Cardiac septum (tissue), 1 donor: ENCODE measurements at regions of chr3 and their contacts with region 1.

Region 1: DNA sequence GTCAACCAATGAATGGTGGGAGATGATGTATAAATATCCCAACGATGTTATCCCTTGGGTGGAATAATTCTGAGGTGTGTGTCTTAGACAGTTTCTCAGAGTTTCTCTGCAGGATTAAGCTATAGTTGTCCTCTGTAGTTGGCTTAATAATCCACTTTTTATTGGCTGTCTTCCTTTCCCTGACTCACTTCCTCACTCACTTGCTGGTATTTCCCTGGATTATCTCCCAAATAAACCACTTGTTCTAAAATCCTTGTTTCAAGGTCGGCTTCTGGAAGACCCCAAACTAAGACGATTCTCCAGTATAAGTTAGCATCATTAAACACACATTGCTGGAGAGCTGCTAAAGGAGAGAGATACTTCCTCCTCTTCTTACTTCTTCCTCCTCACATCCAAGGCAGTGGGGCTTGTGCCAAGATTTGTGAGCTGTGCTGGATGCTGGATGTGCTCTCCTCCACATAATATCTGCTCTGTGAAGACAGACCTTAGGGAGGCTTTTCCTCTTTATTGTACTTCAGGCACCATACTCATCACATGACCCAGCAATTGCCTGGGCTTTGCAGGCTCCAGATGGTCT is 22.5 kb upstream of the ROPN1 start:
- DNase-seq: no peak

Region 2: DNA sequence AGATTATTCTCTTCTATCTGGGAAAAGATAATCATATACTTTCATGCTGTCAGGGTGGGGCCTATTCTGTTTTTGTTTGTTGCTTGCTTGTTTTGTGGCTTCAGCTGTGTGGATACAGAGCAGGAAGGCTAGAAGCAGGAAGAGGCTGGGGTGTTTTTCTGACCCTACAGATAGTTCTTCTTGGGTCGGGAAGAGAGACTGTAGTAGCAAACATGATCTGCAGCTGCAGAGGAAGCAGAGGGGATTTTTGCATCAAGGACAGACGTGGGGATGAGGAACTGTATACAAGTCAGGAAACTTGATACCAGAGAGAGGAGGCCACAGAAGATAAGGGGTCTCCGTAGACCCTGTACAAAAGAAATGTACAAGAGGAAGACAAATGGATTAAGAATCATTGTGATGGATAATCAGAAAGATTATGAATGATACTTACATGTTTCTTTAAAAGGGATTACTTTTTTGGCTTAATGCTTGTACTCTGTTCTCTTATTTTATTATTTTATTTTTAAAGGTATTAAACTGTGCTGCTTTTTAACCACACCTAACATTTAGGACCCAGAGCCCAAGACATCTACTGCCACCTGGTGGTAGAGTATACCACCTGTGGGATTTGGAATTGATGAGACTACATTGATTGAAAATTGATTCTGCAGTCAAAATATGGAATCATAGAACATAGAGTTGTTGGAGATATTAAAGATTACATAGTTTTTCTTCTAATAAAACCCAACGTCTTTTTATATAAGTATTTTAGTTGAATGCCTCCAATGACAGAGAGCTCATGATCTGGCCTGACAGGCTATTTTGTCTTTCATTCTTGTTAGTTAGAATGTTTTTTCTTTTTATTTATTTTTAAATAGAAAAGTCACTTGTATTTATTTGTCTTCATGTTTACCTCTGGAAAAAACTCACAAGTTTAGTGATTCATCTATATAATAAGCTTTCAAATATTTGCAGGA is 64.8 kb after region 1 on chr3:
- intact Hi-C with region 1: loop called (anchors 2 kb)
- DNase-seq: no peak

Region 3: DNA sequence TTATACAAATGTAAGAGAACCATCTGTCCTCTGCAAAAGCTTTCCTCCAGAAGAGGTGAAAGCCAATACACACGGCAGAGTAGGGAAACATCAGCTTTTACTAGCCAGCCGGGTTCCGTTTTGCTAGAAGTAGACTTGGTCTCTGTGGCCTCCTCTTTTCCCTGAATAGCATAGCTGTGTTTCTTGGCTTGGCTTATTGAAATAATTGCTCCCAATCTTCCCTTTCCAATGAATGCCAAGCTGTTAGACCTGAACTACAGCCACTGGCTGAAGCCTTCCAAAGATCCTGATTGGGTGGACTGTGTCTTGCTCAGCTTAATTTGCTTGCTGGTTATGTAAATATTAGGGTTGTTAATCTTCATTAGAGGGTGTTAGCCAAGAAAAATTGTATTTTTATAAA is 135.3 kb after region 1 on chr3:
- intact Hi-C with region 1: no loop called
- DNase-seq: no peak

Region 4: DNA sequence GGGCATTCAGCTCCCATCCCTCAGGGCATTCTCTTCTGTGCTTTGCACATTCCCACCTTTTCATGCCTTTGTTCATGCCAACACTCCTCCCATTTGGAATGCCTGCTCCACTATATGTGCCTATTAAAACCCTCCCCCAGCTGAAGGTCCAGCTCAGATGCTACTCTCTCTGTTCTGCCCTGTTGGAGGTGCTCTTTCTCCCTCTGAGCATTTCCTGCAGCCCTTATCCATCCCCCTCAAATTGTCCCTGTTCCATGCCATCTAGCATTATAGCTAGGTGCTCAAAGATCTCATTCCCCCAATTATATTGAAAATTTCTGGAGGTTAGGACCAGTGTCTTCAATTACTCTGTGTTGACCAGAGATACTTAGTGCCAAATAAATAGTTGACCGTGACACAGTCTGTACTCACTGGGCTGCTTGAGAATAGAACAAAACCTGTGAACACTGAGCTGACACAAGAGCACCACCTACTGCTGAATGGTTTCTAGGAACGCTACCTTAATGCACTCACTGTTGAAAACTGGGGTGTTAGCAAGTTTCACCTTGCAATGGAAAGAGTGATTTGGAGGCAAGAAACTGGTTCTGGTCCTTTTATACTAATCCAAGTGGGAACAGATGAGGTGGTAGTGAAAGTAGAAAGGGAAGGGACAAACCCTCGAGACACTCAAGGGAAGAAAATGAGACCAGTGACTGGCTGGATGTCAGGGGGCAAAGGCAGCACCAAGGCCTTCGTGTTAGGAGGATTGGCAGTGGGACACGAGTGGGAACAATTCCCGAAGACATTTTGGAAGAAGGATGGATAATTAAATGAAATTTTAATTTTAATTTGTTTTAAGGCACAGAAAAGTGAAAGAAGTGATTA is 267.2 kb after region 1 on chr3:
- intact Hi-C with region 1: loop called (anchors 2 kb)
- DNase-seq: no peak

Region 5: DNA sequence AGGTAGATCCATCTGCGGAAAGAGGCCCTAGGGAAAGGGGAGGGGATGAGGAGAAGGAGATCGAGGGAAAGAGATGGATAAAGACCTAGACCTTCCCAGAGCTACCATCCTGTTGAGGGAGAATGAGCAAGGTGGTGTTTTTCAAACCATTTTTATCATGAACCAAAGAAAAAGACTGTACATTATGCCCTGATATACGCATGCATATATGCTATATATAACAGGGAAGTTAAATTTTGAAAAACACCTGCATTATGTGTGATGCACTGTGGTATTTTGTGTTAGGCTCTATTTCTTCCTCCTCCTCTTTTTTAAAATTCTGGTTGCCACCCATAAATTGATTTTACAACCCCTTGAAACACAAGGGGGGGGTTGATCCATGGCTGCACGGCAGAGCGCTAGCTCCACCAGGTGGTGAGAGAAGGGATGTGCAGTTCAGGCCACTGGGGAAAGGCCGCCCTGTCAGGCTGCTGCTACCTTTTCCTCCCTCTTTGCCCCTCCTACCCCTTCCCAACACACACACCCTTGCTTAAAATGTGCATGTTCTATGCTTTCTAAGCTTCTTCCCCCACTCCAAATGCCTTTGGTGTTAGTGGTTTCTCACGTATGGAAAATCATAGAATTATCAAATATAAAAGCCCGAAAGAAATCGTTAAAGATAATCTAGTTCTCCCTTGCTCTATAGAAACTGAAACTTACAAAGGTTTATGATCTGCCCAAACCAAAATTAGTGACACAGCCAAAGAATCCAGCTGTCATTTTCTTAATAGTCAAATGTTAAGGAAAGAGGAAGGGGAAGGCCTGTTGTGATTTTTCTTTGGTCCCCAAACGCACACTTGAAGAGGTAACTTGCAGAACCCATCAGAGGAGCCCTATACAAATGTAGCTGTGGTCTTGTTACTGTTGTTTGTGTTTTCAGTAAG is 453.8 kb after region 1 on chr3:
- intact Hi-C with region 1: loop called (anchors 2 kb)
- DNase-seq: no peak